Right ventricle myocardium inferior (tissue), 1 donor: ENCODE measurements at regions of chr1 and their contacts with region 1.

Region 1: DNA sequence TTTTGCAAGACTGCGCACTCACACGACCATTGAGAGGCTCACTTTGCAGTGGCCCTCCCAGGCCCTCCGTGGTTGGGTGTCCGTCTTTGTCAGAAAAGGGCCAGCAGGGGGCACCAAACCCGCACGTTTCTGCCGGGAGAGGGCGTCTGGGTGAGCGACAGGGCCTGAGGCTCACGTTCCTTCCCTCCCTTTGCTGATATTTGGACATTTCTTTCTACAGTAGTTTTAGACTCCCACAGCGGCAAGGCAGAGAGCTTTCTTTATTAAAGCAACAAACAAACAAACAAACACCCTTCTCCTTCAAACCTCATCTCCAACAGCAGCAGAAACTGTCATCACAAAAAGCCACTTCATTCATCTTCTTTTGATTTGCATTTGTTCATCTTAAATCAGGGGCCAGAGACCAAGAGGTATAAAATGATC is 79.2 kb upstream of the WDR26 start:
- DNase-seq: peak; percentile 89
- ATAC-seq: peak; percentile 91

Region 2: DNA sequence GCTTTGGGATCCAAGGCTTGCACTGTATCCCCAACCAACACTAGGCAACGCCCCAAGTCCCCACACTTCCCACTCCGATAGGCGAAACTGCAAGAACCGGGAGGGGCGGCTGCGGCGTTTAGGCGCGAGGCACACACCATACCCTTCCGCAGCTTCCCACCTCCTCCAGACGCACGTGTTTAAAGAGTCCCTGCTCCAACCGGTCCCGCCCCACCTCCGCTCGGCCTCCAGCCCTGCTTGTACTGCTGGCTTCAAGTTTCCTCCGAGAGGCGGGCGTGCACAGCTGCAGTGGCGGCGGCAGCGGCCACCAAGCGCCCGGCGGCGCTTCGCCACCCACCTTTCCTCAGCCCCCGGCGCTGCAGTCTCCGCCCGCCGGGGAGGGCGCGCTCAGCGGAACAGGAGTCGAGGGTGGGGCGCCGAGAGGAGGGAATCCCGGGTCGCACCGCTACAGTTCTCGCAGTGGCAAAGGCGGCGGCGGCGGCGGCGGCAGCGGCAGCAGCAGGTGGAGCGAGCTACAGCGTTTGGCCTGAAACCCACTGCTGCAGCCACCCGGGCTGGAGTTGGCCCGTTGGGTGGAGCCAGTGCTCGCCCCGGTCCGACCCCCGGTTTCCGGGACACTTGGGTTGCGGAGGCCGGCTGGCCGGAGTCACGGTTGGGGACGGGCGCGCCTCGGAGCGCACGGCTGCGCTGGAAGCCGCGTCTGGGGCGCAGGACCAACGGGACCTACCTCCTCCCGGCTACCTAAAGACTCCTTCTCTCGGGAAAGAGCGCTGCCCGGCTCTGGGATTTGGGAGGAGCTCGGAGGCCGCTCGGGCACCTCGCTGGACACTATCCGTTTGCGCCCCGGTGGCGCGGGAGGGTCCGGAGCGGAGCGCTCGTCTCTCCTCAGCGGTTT is 102.3 kb after region 1 on chr1 and contains the start of gene CNIH3:
- intact Hi-C with region 1: no loop called
- DNase-seq: no peak
- ATAC-seq: no peak
- total RNA-seq, gene CNIH3: 1.2 TPM

Region 3: GRCh38 chr1:224689374-224689773 is 175.6 kb after region 1 on chr1:
- intact Hi-C with region 1: no loop called
- DNase-seq: no peak
- ATAC-seq: no peak

Region 4: DNA sequence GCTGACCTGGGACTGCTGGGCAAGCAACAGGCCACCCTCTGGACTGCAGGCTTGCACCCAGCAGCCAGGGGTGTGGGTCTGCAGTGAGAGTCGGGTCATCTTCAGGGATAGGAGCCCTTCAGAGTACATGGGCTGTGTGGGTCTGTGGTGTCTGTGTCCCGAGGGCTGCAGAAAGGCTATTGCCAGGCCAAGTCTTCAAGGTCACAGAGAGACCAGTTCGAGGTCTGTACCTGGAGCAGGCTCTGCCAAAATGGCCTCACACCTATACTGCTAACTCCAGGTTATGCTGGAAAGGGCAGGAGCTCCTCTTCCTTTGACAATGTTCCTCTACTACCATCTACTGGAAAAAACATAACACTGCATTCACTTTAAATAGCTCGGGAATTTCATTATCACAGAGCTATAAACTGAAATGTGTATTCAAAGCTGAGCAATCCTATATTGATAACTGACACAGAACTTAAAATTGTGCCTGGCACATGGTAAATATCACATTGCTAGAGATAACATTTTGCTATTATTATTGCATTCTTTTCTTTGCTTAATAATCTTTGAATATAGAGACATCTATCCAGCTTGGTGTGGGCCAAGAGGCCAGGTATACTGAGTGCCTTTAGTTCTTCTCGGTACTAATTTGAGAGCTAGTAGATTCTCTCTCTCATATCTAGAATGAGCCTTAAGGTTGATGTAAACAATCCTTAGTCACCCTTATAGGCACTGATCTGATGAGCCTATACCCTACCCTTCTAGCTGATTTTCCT is 408.8 kb after region 1 on chr1:
- intact Hi-C with region 1: loop called (anchors 2 kb)
- DNase-seq: no peak
- ATAC-seq: no peak

Region 5: DNA sequence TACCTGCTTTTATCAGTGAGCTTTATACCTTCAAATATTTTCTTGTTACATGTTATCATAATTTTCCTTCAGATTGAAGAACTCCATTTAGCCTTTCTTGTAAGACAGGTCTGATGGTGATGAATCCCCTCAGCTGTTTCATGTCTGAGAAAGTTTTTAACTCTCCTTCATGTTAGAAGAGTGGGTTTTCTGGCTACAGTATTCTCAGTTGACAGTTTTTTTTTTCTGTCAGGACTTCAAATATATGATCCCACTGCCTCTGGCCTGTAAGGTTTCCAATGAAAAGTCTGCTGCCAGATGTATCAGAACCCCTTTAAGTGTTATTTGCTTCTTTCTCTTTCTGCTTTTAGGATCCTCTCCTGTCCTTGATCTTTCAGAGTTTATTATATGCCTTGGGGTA is 665.9 kb after region 1 on chr1:
- intact Hi-C with region 1: no loop called
- DNase-seq: no peak
- ATAC-seq: no peak